ENCODE measurements at regions of chr1 and their contacts with region 1.

Region 1: GRCh38 chr1:28877132-28877781 is 37.1 kb upstream of the EPB41 start:
- DNase-seq: peak; percentile 48 to 77 (median 67)
- ATAC-seq: peak; percentile 86
- H3K4me3 ChIP-seq: no peak overlapping the region
- H3K4me3 Mint-ChIP-seq: peak overlapping the region in 1 of 10 donors; percentile 32
- H3K27ac ChIP-seq: no peak overlapping the region
- H3K27ac Mint-ChIP-seq: no peak overlapping the region
- H3K4me1 ChIP-seq: no peaks in the 10 kb centered on the region
- H3K4me1 Mint-ChIP-seq: peaks cover 4 to 16% (median 7%) of the 10 kb centered on the region in 7 donors
- H3K27me3 ChIP-seq: no peaks in the 10 kb centered on the region
- H3K27me3 Mint-ChIP-seq: peaks cover 0 to 17% (median 5%) of the 10 kb centered on the region in 5 donors

Region 2: GRCh38 chr1:27136998-27137542 is 1740.2 kb before region 1 on chr1:
- CTCF ChIA-PET with region 1: no interaction called
- POLR2A ChIA-PET with region 1: no interaction called
- intact Hi-C with region 1: no loop called
- DNase-seq: peak; percentile 57 to 85 (median 83)
- ATAC-seq: peak; percentile 90
- H3K4me3 ChIP-seq: peak overlapping the region; percentile 64
- H3K4me3 Mint-ChIP-seq: peak overlapping the region; percentile 76 to 97 (median 89)
- H3K27ac ChIP-seq: peak overlapping the region; percentile 87
- H3K27ac Mint-ChIP-seq: peak overlapping the region; percentile 98 to 100 (median 99)
- H3K4me1 ChIP-seq: peaks cover 25 to 34% of the 10 kb centered on the region in 2 donors
- H3K4me1 Mint-ChIP-seq: peaks cover 44 to 64% (median 58%) of the 10 kb centered on the region in 7 donors
- H3K27me3 ChIP-seq: no peaks in the 10 kb centered on the region
- H3K27me3 Mint-ChIP-seq: no peaks in the 10 kb centered on the region

Region 3: DNA sequence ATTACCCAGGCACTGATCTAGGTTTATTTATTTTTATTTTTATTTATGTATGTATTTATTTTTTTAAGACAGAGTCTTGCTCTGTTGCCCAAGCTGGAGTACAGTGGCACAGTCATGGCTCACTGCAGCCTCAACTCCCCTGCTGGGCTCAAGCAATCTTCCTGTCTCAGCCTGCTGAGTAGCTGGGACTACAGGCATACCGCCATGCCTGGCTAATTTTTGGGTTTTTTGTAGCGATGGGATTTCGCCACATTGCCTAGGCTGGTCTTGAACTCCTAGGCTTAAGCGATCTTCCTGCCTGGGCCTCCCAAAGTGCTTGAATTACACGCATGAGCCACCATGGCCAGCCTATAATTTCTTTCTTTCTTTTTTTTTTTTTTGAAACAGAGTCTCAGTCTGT is 498.4 kb before region 1 on chr1:
- CTCF ChIA-PET with region 1: no interaction called
- POLR2A ChIA-PET with region 1: no interaction called
- intact Hi-C with region 1: no loop called
- DNase-seq: no peak
- ATAC-seq: no peak
- H3K4me3 ChIP-seq: no peak overlapping the region
- H3K4me3 Mint-ChIP-seq: no peak overlapping the region
- H3K27ac ChIP-seq: no peak overlapping the region
- H3K27ac Mint-ChIP-seq: no peak overlapping the region
- H3K4me1 ChIP-seq: no peaks in the 10 kb centered on the region
- H3K4me1 Mint-ChIP-seq: peaks cover 13 to 51% (median 40%) of the 10 kb centered on the region in 7 donors
- H3K27me3 ChIP-seq: no peaks in the 10 kb centered on the region
- H3K27me3 Mint-ChIP-seq: no peaks in the 10 kb centered on the region

Region 4: GRCh38 chr1:28409090-28409489 is 468.2 kb before region 1 on chr1:
- CTCF ChIA-PET with region 1: interaction called, 4 read pairs
- POLR2A ChIA-PET with region 1: interaction called, 3 read pairs
- intact Hi-C with region 1: loop called (anchors 1 to 5 kb)
- DNase-seq: no peak
- ATAC-seq: no peak
- H3K4me3 ChIP-seq: no peak overlapping the region
- H3K4me3 Mint-ChIP-seq: no peak overlapping the region
- H3K27ac ChIP-seq: no peak overlapping the region
- H3K27ac Mint-ChIP-seq: peak overlapping the region in 1 of 9 donors; percentile 39
- H3K4me1 ChIP-seq: no peaks in the 10 kb centered on the region
- H3K4me1 Mint-ChIP-seq: peaks cover 0 to 14% (median 11%) of the 10 kb centered on the region in 7 donors
- H3K27me3 ChIP-seq: no peaks in the 10 kb centered on the region
- H3K27me3 Mint-ChIP-seq: no peaks in the 10 kb centered on the region

Region 5: GRCh38 chr1:28782011-28782410 is 95.2 kb before region 1 on chr1:
- CTCF ChIA-PET with region 1: interaction called, 45 read pairs
- POLR2A ChIA-PET with region 1: interaction called, 3 read pairs
- intact Hi-C with region 1: loop called (anchors 1 kb)
- DNase-seq: no peak
- ATAC-seq: no peak
- H3K4me3 ChIP-seq: no peak overlapping the region
- H3K4me3 Mint-ChIP-seq: no peak overlapping the region
- H3K27ac ChIP-seq: no peak overlapping the region
- H3K27ac Mint-ChIP-seq: peak overlapping the region in 1 of 9 donors; percentile 62
- H3K4me1 ChIP-seq: no peaks in the 10 kb centered on the region
- H3K4me1 Mint-ChIP-seq: peaks cover 0 to 10% (median 5%) of the 10 kb centered on the region in 7 donors
- H3K27me3 ChIP-seq: no peaks in the 10 kb centered on the region
- H3K27me3 Mint-ChIP-seq: peaks cover 0 to 10% (median 0%) of the 10 kb centered on the region in 5 donors

Region 6: DNA sequence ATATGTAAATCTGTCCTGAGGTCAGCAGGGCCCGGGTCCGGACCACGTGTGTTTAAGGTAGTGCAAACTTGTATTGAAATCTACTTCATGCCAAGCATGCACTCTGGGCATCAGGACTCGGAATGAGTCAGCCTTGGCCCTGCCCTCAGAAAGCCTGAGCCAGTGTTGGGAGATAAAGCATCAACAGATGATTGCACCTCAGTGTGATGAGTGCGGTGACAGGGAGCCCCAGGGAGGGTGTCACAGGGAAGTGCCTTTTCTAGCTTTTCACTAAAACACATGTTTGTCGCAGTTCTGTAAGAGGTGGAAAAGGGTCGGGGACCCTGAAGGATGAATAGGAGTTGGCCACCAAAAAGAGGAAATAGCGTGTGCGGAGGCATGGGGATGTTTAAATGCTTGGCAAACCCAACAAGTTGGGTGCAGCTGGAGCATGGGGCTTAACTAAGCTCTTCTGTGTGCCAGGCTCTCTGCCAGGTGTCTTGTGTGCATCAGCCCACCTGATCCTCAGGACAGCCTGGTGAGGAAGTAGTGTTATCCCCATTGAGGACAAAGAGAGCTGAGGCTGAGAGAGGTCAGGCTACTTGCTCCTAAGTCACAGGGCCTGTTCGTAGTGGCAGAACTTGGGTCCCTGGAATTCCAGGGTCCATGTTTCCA is 11.1 kb before region 1 on chr1:
- CTCF ChIA-PET with region 1: interaction called, 10 read pairs
- POLR2A ChIA-PET with region 1: no interaction called
- intact Hi-C with region 1: no loop called
- DNase-seq: no peak
- ATAC-seq: no peak
- H3K4me3 ChIP-seq: no peak overlapping the region
- H3K4me3 Mint-ChIP-seq: no peak overlapping the region
- H3K27ac ChIP-seq: no peak overlapping the region
- H3K27ac Mint-ChIP-seq: no peak overlapping the region
- H3K4me1 ChIP-seq: no peaks in the 10 kb centered on the region
- H3K4me1 Mint-ChIP-seq: no peaks in the 10 kb centered on the region
- H3K27me3 ChIP-seq: no peaks in the 10 kb centered on the region
- H3K27me3 Mint-ChIP-seq: peaks cover 0 to 5% (median 4%) of the 10 kb centered on the region in 5 donors

Region 7: DNA sequence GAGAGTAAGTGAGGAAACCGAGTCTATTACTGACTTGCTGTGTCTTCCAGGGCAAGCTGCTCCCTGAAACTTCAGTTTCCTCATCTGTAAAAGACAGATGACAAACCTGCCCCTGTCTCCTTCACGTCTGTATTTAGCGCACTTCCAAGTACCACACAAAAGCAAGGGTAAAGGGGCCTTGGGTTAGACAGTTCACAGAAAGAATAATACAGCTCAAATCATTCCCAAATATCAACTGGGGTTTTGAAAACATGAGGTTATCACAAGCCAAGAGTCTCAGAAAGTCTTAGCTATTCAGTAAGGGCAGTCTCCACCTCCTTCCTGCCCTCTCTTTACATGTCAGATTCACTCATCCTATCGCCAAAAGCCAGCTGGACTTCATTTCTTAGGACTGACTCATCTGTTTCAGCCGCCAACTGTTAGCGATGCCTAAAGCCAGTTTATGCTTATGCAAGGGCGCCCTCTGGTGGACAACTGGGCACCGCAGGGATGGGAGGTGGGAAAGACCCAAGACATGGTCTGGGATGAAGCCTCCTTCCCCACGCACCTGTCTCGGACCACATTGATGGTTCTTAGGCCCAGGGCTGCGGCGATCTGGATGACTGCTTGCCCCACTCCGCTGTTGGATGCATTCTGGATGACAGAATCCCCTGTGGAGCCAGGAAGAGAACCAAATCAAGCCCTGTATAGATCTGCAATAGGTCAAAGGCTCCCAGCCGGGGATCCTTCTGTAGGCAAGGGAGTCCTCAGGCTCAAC is 325.5 kb after region 1 on chr1:
- CTCF ChIA-PET with region 1: interaction called, 36 read pairs
- POLR2A ChIA-PET with region 1: no interaction called
- intact Hi-C with region 1: loop called (anchors 1 kb)
- DNase-seq: peak; percentile 58 to 91 (median 76)
- ATAC-seq: peak; percentile 94
- H3K4me3 ChIP-seq: no peak overlapping the region
- H3K4me3 Mint-ChIP-seq: no peak overlapping the region
- H3K27ac ChIP-seq: no peak overlapping the region
- H3K27ac Mint-ChIP-seq: no peak overlapping the region
- H3K4me1 ChIP-seq: no peaks in the 10 kb centered on the region
- H3K4me1 Mint-ChIP-seq: peaks cover 0 to 13% (median 3%) of the 10 kb centered on the region in 7 donors
- H3K27me3 ChIP-seq: no peaks in the 10 kb centered on the region
- H3K27me3 Mint-ChIP-seq: no peaks in the 10 kb centered on the region

Measured in naive thymus-derived CD4-positive, alpha-beta T cell (primary cell).